ENCODE measurements at regions of chr5 and their contacts with region 1.

Region 1: GRCh38 chr5:160508780-160509361 is 87.2 kb downstream of the PTTG1 start:
- DNase-seq: peak; percentile 80
- H3K4me3 ChIP-seq: no peak overlapping the region
- H3K27ac ChIP-seq: no peak overlapping the region
- H3K4me1 ChIP-seq: no peaks in the 10 kb centered on the region
- H3K27me3 ChIP-seq: no peaks in the 10 kb centered on the region
- CTCF ChIP-seq: peak; percentile 89

Region 2: GRCh38 chr5:160439205-160439600 is 69.7 kb before region 1 on chr5:
- intact Hi-C with region 1: loop called (anchors 5 kb)
- DNase-seq: peak; percentile 95
- H3K4me3 ChIP-seq: peak overlapping the region; percentile 15
- H3K27ac ChIP-seq: no peak overlapping the region
- H3K4me1 ChIP-seq: no peaks in the 10 kb centered on the region
- H3K27me3 ChIP-seq: no peaks in the 10 kb centered on the region
- CTCF ChIP-seq: peak; percentile 94

Region 3: GRCh38 chr5:160450164-160450932 is 58.5 kb before region 1 on chr5:
- intact Hi-C with region 1: loop called (anchors 5 kb)
- DNase-seq: no peak
- H3K4me3 ChIP-seq: no peak overlapping the region
- H3K27ac ChIP-seq: no peak overlapping the region
- H3K4me1 ChIP-seq: no peaks in the 10 kb centered on the region
- H3K27me3 ChIP-seq: no peaks in the 10 kb centered on the region
- CTCF ChIP-seq: no peak

Region 4: DNA sequence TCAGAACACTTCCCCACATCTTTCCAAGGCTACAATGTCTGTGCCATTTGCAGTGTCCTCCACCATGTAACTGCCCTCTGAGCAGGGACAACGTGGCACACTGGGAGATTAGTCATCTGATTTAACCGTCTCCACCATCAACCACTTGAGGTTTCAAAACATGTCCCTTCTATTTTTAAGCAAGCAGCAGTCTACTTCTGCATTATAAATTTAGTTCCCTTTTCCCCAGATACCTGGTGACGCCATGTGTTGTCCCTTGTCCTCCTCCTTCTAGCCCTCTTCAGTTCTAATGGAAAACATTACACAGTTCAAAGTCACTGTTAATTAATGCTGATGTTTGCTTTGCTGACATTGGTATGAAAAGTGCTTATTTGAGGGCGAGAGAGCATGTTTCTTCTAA is 290.3 kb after region 1 on chr5:
- intact Hi-C with region 1: loop called (anchors 10 kb)
- DNase-seq: no peak
- H3K4me3 ChIP-seq: no peak overlapping the region
- H3K27ac ChIP-seq: no peak overlapping the region
- H3K4me1 ChIP-seq: no peaks in the 10 kb centered on the region
- H3K27me3 ChIP-seq: no peaks in the 10 kb centered on the region
- CTCF ChIP-seq: no peak

Region 5: GRCh38 chr5:160970605-160971191 is 461.8 kb after region 1 on chr5:
- intact Hi-C with region 1: no loop called
- DNase-seq: no peak
- H3K4me3 ChIP-seq: no peak overlapping the region
- H3K27ac ChIP-seq: no peak overlapping the region
- H3K4me1 ChIP-seq: no peaks in the 10 kb centered on the region
- H3K27me3 ChIP-seq: no peaks in the 10 kb centered on the region
- CTCF ChIP-seq: no peak